ENCODE measurements at regions of chr4 and their contacts with region 1.

Region 1: DNA sequence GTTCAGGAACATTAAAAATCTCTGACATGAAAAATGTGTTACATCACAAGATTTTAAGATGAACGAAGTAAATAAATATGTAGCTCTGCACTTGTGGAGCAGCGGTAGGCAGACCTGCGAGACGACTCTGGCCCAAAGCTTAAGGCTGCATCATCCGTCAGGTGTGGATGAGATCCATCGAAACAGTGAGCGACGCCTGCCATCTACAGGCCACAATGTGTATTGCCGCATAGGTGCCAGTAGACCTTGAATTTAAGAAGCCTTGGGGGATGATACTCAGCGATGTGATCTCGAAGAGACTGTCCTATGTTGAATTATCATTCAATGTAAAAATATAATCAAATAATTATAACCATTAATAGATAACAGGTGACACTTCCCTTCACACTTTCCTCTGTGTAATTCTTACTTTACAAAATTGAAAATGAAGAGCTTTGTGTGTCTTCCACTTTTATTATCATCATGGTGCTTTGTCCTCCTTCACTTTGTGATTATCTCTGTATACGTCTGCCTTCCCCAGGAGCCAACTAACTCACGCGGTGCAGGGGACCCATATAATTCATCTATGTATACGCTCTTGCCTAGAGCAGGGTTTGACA is 851.0 kb downstream of the RAB28 start:
- DNase-seq: peak; percentile 70
- H3K4me3 ChIP-seq: no peak overlapping the region
- H3K27ac ChIP-seq: no peak overlapping the region
- H3K4me1 ChIP-seq: no peaks in the 10 kb centered on the region
- H3K27me3 ChIP-seq: no peaks in the 10 kb centered on the region
- CTCF ChIP-seq: peak; percentile 88

Region 2: DNA sequence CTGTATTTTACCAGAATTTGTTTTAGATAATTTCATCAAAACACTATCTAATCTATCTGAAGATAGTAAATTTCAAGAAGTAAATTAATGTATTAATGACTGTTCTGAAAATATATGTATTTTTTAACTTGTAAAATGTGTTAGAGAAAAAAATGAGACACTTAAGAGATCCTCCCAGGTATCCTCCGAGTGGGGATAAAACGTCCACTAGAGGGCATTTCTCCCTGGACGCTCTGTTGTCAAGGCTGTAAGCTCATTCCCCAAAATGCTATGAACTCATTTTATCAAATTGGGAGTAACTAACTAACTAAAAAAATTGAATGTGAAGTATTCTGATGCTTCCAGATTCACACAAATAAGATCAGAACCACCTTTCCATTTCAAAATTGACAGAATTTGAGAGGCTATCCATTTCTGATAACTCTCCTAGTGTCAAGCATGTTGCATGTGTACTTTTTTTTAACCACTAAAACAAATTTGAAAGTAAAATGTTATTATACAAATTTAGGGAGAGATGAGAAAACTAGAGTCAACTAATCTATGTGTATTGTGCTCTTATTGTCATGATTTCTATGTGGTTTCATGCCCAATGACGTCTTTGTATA is 867.2 kb before region 1 on chr4:
- CTCF ChIA-PET with region 1: no interaction called
- POLR2A ChIA-PET with region 1: no interaction called
- intact Hi-C with region 1: loop called (anchors 10 kb)
- DNase-seq: peak; percentile 19
- H3K4me3 ChIP-seq: no peak overlapping the region
- H3K27ac ChIP-seq: no peak overlapping the region
- H3K4me1 ChIP-seq: no peaks in the 10 kb centered on the region
- H3K27me3 ChIP-seq: no peaks in the 10 kb centered on the region
- CTCF ChIP-seq: peak; percentile 58